GM10248 (cell line): ENCODE measurements at regions of chr1 and their contacts with region 1.

Region 1: DNA sequence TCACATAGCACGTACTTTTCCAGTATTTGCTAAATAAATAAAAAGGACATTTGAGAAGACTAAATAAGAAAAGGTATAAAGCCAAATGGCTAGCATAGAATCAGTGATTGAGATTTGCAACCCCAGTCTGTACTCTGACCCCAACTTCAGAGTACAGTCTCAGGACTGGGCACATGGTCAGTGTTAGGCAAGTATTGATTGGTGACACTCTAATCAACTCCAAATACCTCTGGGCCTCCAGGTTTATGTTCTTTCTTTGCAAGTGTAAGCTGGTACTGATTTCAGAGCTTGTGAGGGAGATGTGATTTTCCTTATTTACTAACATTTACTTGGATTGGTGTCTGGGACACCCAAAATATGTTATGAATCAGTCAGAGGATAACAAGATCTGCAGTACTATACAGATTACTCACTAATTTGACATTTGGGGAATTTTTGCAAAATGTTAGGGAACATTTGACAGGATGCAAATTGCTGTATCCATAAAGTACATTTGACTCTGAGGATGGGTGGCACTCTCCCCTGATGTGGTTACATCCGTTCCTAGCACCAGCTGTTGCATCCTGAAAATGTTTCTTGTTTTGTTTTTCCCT is 34.2 kb downstream of the LMO4 start:
- DNase-seq: no peak
- CTCF ChIP-seq: no peak

Region 2: GRCh38 chr1:87864676-87865075 is 501.7 kb after region 1 on chr1:
- CTCF ChIA-PET with region 1: no interaction called
- POLR2A ChIA-PET with region 1: interaction called, 12 read pairs
- DNase-seq: no peak
- CTCF ChIP-seq: no peak